ENCODE measurements at regions of chr6 and their contacts with region 1.

Region 1: GRCh38 chr6:70413114-70413991 is at the start of gene FAM135A:
- H3K4me3 Mint-ChIP-seq: peak within 1 kb of the TSS; percentile 97
- H3K27ac Mint-ChIP-seq: peak within 1 kb of the TSS; percentile 82
- H3K4me1 Mint-ChIP-seq: peaks cover 33% of the 10 kb centered on the region
- H3K27me3 Mint-ChIP-seq: no peaks in the 10 kb centered on the region

Region 2: DNA sequence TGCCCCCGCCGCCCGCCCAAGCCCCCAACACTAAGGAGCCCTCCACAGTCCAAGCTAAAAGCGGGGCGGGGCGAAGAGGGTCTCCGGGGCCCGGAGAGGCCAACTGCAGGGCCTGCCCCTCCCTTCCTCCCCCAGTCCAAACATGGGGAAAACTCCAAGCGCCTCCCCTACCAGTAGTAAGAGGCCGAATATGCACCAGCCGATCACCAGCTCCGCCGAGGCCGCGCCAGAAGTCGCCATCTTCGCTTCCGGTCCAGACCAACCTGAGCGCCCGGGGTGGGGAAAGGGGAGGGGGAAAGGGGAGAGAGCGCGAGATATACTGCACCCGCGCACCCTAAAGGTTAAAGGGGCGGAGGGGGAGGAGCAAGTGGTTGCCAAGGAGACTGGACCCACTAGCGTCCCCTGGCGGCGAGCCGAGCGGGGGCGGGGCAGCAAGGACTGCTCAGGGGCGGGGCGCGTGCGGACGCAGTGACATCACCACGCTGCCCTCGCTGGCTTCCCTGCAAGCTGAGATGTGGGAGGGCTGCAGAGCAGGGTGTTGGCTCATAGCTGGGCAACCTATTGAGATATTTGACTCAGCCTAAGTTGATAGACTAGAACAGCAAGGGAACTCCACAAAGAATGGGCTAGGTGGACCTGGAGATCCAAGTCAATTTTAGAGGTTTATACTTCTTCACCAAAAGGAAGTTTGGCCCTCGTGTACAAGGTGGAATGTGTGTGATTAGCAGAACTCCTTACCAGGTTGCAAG is 616.5 kb before region 1 on chr6 and contains the start of gene LMBRD1:
- intact Hi-C with region 1: loop called (anchors 5 kb)
- H3K4me3 Mint-ChIP-seq: peak within 1 kb of the TSS; percentile 90
- H3K27ac Mint-ChIP-seq: peak within 1 kb of the TSS; percentile 93
- H3K4me1 Mint-ChIP-seq: peaks cover 38% of the 10 kb centered on the region
- H3K27me3 Mint-ChIP-seq: no peaks in the 10 kb centered on the region

Region 3: GRCh38 chr6:70353343-70353913 is 59.9 kb before region 1 on chr6:
- intact Hi-C with region 1: no loop called
- H3K4me3 Mint-ChIP-seq: no peak overlapping the region
- H3K27ac Mint-ChIP-seq: no peak overlapping the region
- H3K4me1 Mint-ChIP-seq: no peaks in the 10 kb centered on the region
- H3K27me3 Mint-ChIP-seq: peaks cover 2% of the 10 kb centered on the region

Region 4: GRCh38 chr6:70369332-70369950 is 43.9 kb before region 1 on chr6:
- intact Hi-C with region 1: no loop called
- H3K4me3 Mint-ChIP-seq: no peak overlapping the region
- H3K27ac Mint-ChIP-seq: no peak overlapping the region
- H3K4me1 Mint-ChIP-seq: peaks cover 5% of the 10 kb centered on the region
- H3K27me3 Mint-ChIP-seq: peaks cover 8% of the 10 kb centered on the region

Region 5: GRCh38 chr6:70379473-70380013 is 33.8 kb before region 1 on chr6:
- intact Hi-C with region 1: no loop called
- H3K4me3 Mint-ChIP-seq: no peak overlapping the region
- H3K27ac Mint-ChIP-seq: no peak overlapping the region
- H3K4me1 Mint-ChIP-seq: no peaks in the 10 kb centered on the region
- H3K27me3 Mint-ChIP-seq: peaks cover 2% of the 10 kb centered on the region

Region 6: DNA sequence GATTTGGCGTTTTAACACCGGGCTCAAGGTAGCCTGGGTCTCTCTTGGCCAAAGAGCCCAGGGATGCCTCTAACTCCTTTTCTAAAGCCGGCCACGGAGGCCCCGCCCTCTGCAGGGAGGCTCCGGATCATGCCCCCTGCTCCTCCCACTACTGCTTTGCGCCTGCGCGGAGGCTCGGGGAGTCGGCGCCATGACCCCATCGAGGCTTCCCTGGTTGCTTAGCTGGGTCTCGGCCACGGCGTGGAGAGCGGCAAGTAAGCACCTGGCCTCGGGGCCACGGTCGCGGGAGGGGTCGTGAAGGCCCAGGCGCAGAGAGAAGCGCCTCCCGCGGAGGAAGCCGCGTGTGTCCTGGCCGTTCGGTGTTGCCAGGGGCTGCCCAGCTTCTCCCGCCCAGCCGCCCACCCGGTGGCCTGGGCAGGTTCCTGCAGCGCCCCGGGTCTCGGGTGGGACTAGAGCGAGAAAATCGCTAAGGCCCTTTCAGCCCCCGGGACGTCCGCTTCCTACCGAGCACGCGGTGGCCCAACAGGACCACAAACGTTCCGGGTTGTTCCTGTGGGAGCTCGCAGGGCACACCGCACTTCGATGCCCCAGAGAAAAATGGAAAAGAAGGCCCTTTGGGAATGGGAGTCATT is 153.5 kb after region 1 on chr6 and contains the start of gene SDHAF4:
- intact Hi-C with region 1: loop called (anchors 10 kb)
- H3K4me3 Mint-ChIP-seq: peak within 1 kb of the TSS; percentile 76
- H3K27ac Mint-ChIP-seq: peak within 1 kb of the TSS; percentile 81
- H3K4me1 Mint-ChIP-seq: peaks cover 5% of the 10 kb centered on the region
- H3K27me3 Mint-ChIP-seq: no peaks in the 10 kb centered on the region

Region 7: DNA sequence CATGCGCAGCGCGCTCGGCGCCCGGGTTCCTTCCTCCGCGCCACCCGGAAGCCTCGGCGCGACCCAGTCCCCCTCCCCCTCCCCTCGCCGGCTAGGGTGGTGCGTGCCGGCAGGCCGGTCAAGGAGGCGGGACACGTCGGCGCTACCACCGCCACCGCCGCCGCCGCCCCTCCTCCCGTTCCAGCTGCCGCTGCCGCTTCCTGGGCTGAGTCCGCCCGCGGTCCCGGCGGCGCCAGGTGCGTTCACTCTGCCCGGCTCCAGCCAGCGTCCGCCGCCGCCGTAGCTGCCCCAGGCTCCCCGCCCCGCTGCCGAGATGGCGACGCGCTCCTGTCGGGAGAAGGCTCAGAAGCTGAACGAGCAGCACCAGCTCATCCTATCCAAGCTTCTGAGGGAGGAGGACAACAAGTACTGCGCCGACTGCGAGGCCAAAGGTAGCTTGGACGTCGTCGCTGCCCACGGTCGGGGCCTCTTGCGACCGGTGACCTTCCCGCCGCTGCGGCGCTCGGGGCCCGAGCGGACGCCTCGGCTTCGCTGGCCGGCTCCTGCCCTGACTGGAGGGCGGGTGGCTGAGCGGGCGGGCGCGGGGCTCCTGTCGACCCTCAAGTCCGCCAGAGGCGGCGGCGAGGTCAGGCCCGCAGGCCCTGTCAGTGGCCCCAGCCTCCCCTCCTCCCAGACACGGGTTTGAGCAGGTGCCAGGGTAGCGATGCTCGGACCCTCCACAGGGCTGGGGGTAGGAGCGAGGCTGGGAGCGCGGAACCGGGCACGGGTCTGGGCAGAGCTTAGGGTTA is 254.6 kb after region 1 on chr6 and contains the start of gene SMAP1:
- intact Hi-C with region 1: loop called (anchors 2 kb)
- H3K4me3 Mint-ChIP-seq: peak within 1 kb of the TSS; percentile 87
- H3K27ac Mint-ChIP-seq: peak within 1 kb of the TSS; percentile 93
- H3K4me1 Mint-ChIP-seq: peaks cover 56% of the 10 kb centered on the region
- H3K27me3 Mint-ChIP-seq: no peaks in the 10 kb centered on the region

Region 8: GRCh38 chr6:70686548-70687133 is 273.3 kb after region 1 on chr6:
- intact Hi-C with region 1: loop called (anchors 5 kb)
- H3K4me3 Mint-ChIP-seq: no peak overlapping the region
- H3K27ac Mint-ChIP-seq: no peak overlapping the region
- H3K4me1 Mint-ChIP-seq: peaks cover 22% of the 10 kb centered on the region
- H3K27me3 Mint-ChIP-seq: no peaks in the 10 kb centered on the region

Measured in dendritic cell treated with granulocyte-macrophage colony-stimulating factor and Interleukin-4, amounts not matched to agents 40 ng/mL and 50 ng/mL, for 4 days (primary cell).